Caco-2 (cell line): ENCODE measurements at regions of chr18 and their contacts with region 1.

Region 1: DNA sequence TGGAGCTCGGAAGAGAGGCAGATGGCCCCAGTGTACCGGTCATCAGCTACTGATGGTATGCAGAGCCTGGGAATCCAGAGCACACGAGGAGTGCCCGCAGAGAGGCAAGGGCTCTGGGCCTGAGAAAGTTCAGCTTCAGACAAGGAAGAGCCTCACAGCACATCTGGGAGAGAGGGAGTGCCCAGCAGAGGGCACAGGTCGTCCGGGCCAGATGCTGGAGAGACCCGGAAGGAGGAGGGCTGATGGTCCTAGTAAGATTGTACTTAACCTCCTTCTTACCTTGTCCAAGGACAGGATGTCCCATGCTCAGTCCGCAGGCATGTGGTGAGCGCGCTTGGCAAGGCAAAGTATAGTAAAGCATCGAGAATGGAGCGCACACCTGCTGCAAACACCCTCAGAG is 24.4 kb upstream of the CHMP1B start:
- DNase-seq: no peak
- H3K4me3 ChIP-seq: no peak overlapping the region
- H3K4me3 Mint-ChIP-seq: no peak overlapping the region
- H3K27ac Mint-ChIP-seq: peak overlapping the region; percentile 65
- H3K4me1 ChIP-seq: peaks cover 28% of the 10 kb centered on the region
- H3K4me1 Mint-ChIP-seq: peaks cover 20% of the 10 kb centered on the region
- H3K27me3 ChIP-seq: no peaks in the 10 kb centered on the region
- H3K27me3 Mint-ChIP-seq: no peaks in the 10 kb centered on the region
- CTCF ChIP-seq: no peak

Region 2: GRCh38 chr18:11654736-11655605 is 171.9 kb before region 1 on chr18:
- CTCF ChIA-PET with region 1: no interaction called
- POLR2A ChIA-PET with region 1: no interaction called
- intact Hi-C with region 1: no loop called
- DNase-seq: peak in 1 of 2 experiments; percentile 79
- H3K4me3 ChIP-seq: no peak overlapping the region
- H3K4me3 Mint-ChIP-seq: peak overlapping the region; percentile 44
- H3K27ac Mint-ChIP-seq: no peak overlapping the region
- H3K4me1 ChIP-seq: no peaks in the 10 kb centered on the region
- H3K4me1 Mint-ChIP-seq: no peaks in the 10 kb centered on the region
- H3K27me3 ChIP-seq: no peaks in the 10 kb centered on the region
- H3K27me3 Mint-ChIP-seq: peaks cover 10% of the 10 kb centered on the region
- CTCF ChIP-seq: peak; percentile 83 to 88

Region 3: DNA sequence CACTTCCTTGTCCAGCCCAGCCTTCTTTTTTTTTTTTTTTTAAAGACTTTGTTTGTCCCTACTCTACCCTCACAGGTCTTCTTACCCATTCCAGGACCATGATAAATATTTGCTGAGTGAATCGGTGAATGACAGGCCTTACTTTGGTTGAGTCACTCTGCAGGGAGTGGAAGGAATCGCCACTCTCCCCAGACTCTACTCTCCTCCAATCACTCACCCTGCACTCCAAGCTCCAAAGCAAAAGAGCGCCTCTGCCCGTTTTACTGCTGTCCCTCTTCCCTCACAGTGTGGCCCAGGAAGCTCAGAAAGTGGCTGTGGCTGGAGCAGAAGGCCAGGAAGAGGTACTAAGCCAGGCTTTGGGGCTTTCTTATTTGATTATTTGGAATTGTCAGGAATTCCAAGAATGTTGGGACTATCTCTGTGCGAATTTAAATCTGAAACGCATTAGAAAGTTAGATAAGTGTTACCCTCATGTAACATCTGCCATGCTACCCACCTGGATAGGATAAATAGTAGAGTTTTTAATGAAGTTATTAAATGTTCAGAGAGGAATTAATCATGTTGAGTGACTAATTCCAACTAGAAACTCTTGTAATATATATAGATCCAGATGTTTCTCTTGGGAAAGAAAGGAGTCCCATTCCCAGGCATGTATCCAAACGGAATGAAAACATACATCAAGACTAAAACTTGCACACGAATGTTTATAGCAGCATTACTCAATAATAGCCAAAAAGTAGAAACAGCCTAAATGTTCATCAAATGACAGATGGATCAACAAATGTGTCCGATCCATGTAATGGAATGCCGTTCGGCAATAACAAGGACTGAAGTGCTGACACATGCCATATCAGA is 18.6 kb before region 1 on chr18:
- CTCF ChIA-PET with region 1: no interaction called
- POLR2A ChIA-PET with region 1: no interaction called
- intact Hi-C with region 1: loop called (anchors 1 kb)
- DNase-seq: peak; percentile 66 to 71
- H3K4me3 ChIP-seq: no peak overlapping the region
- H3K4me3 Mint-ChIP-seq: peak overlapping the region; percentile 51
- H3K27ac Mint-ChIP-seq: peak overlapping the region; percentile 79
- H3K4me1 ChIP-seq: peaks cover 56% of the 10 kb centered on the region
- H3K4me1 Mint-ChIP-seq: peaks cover 42% of the 10 kb centered on the region
- H3K27me3 ChIP-seq: no peaks in the 10 kb centered on the region
- H3K27me3 Mint-ChIP-seq: no peaks in the 10 kb centered on the region
- CTCF ChIP-seq: no peak

Region 4: GRCh38 chr18:11872479-11873136 is 45.8 kb after region 1 on chr18:
- CTCF ChIA-PET with region 1: no interaction called
- POLR2A ChIA-PET with region 1: no interaction called
- intact Hi-C with region 1: loop called (anchors 1 kb)
- DNase-seq: peak; percentile 68 to 71
- H3K4me3 ChIP-seq: no peak overlapping the region
- H3K4me3 Mint-ChIP-seq: no peak overlapping the region
- H3K27ac Mint-ChIP-seq: no peak overlapping the region
- H3K4me1 ChIP-seq: peaks cover 10% of the 10 kb centered on the region; the same call in 1 of the 2 replicates
- H3K4me1 Mint-ChIP-seq: peaks cover 7% of the 10 kb centered on the region
- H3K27me3 ChIP-seq: no peaks in the 10 kb centered on the region
- H3K27me3 Mint-ChIP-seq: no peaks in the 10 kb centered on the region
- CTCF ChIP-seq: peak; percentile 74 to 80